OCI-LY7 (cell line): ENCODE measurements at regions of chr7 and their contacts with region 1.

Region 1: GRCh38 chr7:140517546-140518369 is 38.5 kb upstream of the MKRN1 start:
- DNase-seq: peak; percentile 66
- H3K4me3 ChIP-seq: no peak overlapping the region
- H3K27ac ChIP-seq: no peak overlapping the region
- H3K4me1 ChIP-seq: no peaks in the 10 kb centered on the region
- CTCF ChIP-seq: peak; percentile 77

Region 2: GRCh38 chr7:140653319-140654108 is 135.8 kb after region 1 on chr7:
- CTCF ChIA-PET with region 1: interaction called, 3 read pairs
- POLR2A ChIA-PET with region 1: no interaction called
- intact Hi-C with region 1: loop called (anchors 1 kb)
- DNase-seq: peak; percentile 59
- H3K4me3 ChIP-seq: no peak overlapping the region
- H3K27ac ChIP-seq: no peak overlapping the region
- H3K4me1 ChIP-seq: peaks cover 9% of the 10 kb centered on the region
- CTCF ChIP-seq: peak; percentile 95